ENCODE measurements at regions of chr10 and their contacts with region 1.

Region 1: GRCh38 chr10:14074057-14074884 is 256.5 kb downstream of the FRMD4A start:
- DNase-seq: peak; percentile 98
- H3K4me3 ChIP-seq: no peak overlapping the region
- H3K27ac ChIP-seq: peak overlapping the region; percentile 81
- H3K4me1 ChIP-seq: peaks cover 43% of the 10 kb centered on the region
- H3K27me3 ChIP-seq: no peaks in the 10 kb centered on the region
- CTCF ChIP-seq: no peak
- POLR2A ChIP-seq: no peak

Region 2: DNA sequence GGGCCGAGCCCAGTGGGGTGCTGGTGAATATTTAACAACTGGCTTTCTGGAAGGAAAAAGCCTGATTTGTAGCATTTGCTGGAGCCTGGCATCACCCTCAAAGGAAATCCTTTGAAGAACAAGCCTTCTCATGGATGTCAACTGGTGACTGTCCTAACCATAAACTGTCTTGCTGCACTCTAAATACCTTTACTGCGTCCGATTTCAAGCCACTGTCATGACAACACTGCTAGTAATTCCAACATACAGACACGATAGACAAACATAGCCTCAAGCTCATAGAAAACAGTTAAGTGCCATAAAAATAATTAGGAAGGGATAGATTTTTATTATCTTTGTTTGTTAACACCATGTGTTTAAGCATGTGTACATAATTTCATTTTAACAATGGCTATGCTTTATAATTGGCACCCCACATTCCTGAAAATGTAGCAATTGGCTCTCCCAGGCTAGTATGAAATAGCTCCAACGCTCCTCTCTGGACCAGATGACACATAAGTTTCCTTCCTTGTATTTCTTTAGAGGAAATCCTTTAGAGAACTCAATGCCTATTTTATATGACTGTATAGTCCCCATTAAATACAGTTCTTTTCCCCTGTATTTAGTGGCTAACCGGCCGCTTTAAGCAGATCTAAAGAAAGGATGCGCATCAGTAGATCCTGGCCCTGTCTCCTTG is 214.2 kb before region 1 on chr10:
- CTCF ChIA-PET with region 1: no interaction called
- POLR2A ChIA-PET with region 1: no interaction called
- dilution Hi-C with region 1: no loop called
- intact Hi-C with region 1: loop called (anchors 5 kb)
- DNase-seq: peak; percentile 84
- H3K4me3 ChIP-seq: peak overlapping the region in 1 of 3 experiments; percentile 24
- H3K27ac ChIP-seq: peak overlapping the region; percentile 73
- H3K4me1 ChIP-seq: peaks cover 81% of the 10 kb centered on the region
- H3K27me3 ChIP-seq: no peaks in the 10 kb centered on the region
- CTCF ChIP-seq: no peak
- POLR2A ChIP-seq: peak; percentile 40

Measured in endothelial cell of umbilical vein (primary cell).